MCF 10A (cell line): ENCODE measurements at regions of chr20 and their contacts with region 1.

Region 1: DNA sequence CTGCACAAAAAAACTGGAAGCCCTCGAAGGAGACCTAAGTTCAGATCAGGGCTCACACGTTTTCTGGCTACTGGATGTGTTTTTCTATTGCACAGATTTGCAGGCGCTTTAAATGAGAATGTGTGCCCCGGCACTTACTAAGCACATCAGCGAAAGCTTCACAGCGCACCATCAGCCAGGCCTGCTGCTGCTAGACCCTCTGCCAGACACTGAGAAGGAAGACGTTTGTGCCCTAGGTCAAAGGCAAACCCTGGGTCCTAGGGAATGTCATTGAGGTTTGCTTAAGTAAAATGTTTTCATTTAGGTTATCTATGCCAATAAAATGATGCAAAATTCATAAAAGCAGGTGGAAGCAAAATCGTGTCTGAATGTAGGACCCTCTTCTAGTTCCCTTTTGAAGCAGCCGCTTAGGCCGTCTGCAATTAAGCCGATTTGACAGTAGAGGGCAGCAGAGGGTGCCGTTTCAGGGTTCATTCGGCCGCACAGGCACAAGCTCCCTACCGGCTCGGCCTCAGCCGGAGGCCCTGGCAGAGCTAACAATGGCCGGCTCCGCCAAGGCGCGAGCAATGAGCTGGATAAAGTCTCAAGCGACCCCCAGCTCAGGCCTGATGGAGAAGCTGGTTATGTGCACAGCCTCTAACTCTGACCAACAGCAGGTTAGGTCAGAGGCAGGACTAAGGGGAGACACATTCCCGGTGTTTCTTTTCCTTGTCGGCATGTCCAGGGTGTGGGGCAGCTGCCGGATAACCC is 107.2 kb upstream of the FOXA2 start:
- DNase-seq: peak; percentile 74
- H3K4me3 Mint-ChIP-seq: no peak overlapping the region
- H3K27ac Mint-ChIP-seq: no peak overlapping the region
- H3K4me1 Mint-ChIP-seq: peaks cover 13% of the 10 kb centered on the region
- H3K27me3 Mint-ChIP-seq: no peaks in the 10 kb centered on the region
- CTCF ChIP-seq: peak; percentile 94

Region 2: GRCh38 chr20:22353586-22353985 is 338.0 kb before region 1 on chr20:
- CTCF ChIA-PET with region 1: interaction called, 25 read pairs
- POLR2A ChIA-PET with region 1: no interaction called
- intact Hi-C with region 1: no loop called
- DNase-seq: peak; percentile 42
- H3K4me3 Mint-ChIP-seq: no peak overlapping the region
- H3K27ac Mint-ChIP-seq: no peak overlapping the region
- H3K4me1 Mint-ChIP-seq: no peaks in the 10 kb centered on the region
- H3K27me3 Mint-ChIP-seq: no peaks in the 10 kb centered on the region
- CTCF ChIP-seq: no peak

Region 3: DNA sequence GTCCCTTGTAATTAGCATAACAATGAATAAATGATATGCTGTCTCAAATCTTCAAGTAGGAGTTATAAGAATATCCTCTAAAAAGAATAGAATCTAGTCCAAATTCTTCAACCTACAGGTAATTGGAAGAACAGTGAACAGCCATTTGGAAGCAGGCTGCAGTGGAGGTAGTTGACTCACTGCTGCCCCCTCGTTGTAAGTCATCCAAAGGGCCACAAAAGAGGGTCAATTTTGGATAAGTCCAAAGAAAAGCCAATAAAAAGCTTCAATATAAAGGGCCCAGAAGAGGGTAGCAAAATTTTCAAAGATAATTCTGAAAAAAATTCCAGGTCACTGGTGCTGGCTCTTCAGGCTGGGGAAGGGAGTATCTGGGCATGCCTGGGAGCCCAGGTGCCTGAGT is 282.8 kb after region 1 on chr20:
- CTCF ChIA-PET with region 1: interaction called, 42 read pairs
- POLR2A ChIA-PET with region 1: no interaction called
- intact Hi-C with region 1: loop called (anchors 1 kb)
- DNase-seq: peak; percentile 53
- H3K4me3 Mint-ChIP-seq: no peak overlapping the region
- H3K27ac Mint-ChIP-seq: no peak overlapping the region
- H3K4me1 Mint-ChIP-seq: no peaks in the 10 kb centered on the region
- H3K27me3 Mint-ChIP-seq: no peaks in the 10 kb centered on the region
- CTCF ChIP-seq: peak; percentile 61

Region 4: GRCh38 chr20:23094927-23095326 is 403.4 kb after region 1 on chr20:
- CTCF ChIA-PET with region 1: interaction called, 21 read pairs
- POLR2A ChIA-PET with region 1: no interaction called
- intact Hi-C with region 1: no loop called
- DNase-seq: peak; percentile 92
- H3K4me3 Mint-ChIP-seq: peak overlapping the region; percentile 53
- H3K27ac Mint-ChIP-seq: peak overlapping the region; percentile 84
- H3K4me1 Mint-ChIP-seq: peaks cover 38% of the 10 kb centered on the region
- H3K27me3 Mint-ChIP-seq: no peaks in the 10 kb centered on the region
- CTCF ChIP-seq: no peak

Region 5: GRCh38 chr20:23200918-23201317 is 509.4 kb after region 1 on chr20:
- CTCF ChIA-PET with region 1: interaction called, 198 read pairs
- POLR2A ChIA-PET with region 1: interaction called, 7 read pairs
- intact Hi-C with region 1: loop called (anchors 1 kb)
- DNase-seq: peak; percentile 79
- H3K4me3 Mint-ChIP-seq: no peak overlapping the region
- H3K27ac Mint-ChIP-seq: no peak overlapping the region
- H3K4me1 Mint-ChIP-seq: peaks cover 16% of the 10 kb centered on the region
- H3K27me3 Mint-ChIP-seq: no peaks in the 10 kb centered on the region
- CTCF ChIP-seq: peak; percentile 71

Region 6: GRCh38 chr20:23340524-23340923 is 649.0 kb after region 1 on chr20:
- CTCF ChIA-PET with region 1: interaction called, 233 read pairs
- POLR2A ChIA-PET with region 1: interaction called, 9 read pairs
- intact Hi-C with region 1: loop called (anchors 1 kb)
- DNase-seq: peak; percentile 61
- H3K4me3 Mint-ChIP-seq: no peak overlapping the region
- H3K27ac Mint-ChIP-seq: no peak overlapping the region
- H3K4me1 Mint-ChIP-seq: no peaks in the 10 kb centered on the region
- H3K27me3 Mint-ChIP-seq: no peaks in the 10 kb centered on the region
- CTCF ChIP-seq: peak; percentile 62